ENCODE measurements at regions of chr2 and their contacts with region 1.

Region 1: DNA sequence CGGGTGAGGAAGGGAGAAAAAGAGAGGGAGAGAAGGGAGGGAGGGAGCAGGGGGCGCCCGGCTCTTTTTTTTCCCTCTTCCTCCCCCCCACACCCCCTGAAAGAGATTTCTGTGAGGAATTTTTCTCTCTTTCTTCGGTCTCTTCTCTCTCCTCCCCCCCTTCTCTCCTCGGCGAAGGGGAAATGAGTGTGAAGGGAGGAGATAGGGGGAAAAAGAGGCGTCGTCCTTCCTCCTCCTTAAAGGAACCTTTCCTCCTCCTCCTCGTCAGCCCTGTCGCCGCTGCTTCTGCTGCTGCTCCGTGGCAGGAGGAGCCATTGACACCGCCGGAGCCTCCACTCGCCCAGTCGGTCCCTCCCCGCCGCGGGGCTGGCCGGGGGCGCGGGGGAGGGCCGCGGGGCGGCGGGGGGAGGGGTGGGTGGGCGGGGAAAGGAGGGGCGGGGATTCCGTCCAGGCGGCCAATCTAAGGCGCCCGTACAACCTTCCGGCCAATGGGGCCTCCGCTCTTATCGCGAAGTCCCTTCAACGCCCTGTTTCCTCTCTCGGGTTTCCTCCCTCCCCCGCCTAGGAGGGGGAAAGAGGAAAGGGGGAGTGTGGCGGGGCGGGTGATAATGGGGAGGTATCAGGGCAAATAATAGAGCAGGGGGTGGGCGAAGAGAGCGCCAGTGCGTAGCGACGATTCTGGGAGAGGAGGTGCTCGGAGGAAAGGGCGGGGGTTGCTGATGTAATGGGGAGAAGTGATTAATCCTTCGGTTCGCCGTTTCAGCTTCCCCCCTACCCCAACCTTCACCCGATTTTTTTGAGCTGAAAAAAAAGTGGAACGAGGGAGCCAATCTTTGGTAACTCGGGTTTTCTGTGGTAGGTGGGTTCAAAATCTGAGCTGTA is at the start of gene FBXO11:
- DNase-seq: peak; percentile 87 to 99 (median 93)
- ATAC-seq: peak; percentile 77
- H3K4me3 ChIP-seq: peak within 1 kb of the TSS; percentile 86
- H3K4me3 Mint-ChIP-seq: peak within 1 kb of the TSS; percentile 85
- H3K27ac ChIP-seq: peak within 1 kb of the TSS; percentile 91 to 96
- H3K27ac Mint-ChIP-seq: peak within 1 kb of the TSS; percentile 91
- H3K4me1 ChIP-seq: peaks cover 8% of the 10 kb centered on the region
- H3K4me1 Mint-ChIP-seq: peaks cover 52% of the 10 kb centered on the region
- H3K27me3 ChIP-seq: no peaks in the 10 kb centered on the region
- H3K27me3 Mint-ChIP-seq: no peaks in the 10 kb centered on the region
- CTCF ChIP-seq: peak; percentile 60
- total RNA-seq, gene FBXO11: 121 to 126 TPM

Region 2: GRCh38 chr2:47888581-47889280 is 17.7 kb before region 1 on chr2:
- CTCF ChIA-PET with region 1: interaction called, 6 read pairs
- POLR2A ChIA-PET with region 1: interaction called, 16 read pairs
- intact Hi-C with region 1: loop called (anchors 2 kb)
- DNase-seq: peak in 5 of 14 experiments; percentile 31 to 80 (median 71)
- ATAC-seq: peak; percentile 95
- H3K4me3 ChIP-seq: no peak overlapping the region
- H3K4me3 Mint-ChIP-seq: peak overlapping the region; percentile 74
- H3K27ac ChIP-seq: peak overlapping the region in 1 of 2 donors; percentile 22
- H3K27ac Mint-ChIP-seq: peak overlapping the region; percentile 80
- H3K4me1 ChIP-seq: peaks cover 25% of the 10 kb centered on the region
- H3K4me1 Mint-ChIP-seq: peaks cover 85% of the 10 kb centered on the region
- H3K27me3 ChIP-seq: no peaks in the 10 kb centered on the region
- H3K27me3 Mint-ChIP-seq: no peaks in the 10 kb centered on the region
- CTCF ChIP-seq: no peak

Region 3: GRCh38 chr2:48009256-48009655 is 102.9 kb after region 1 on chr2:
- CTCF ChIA-PET with region 1: no interaction called
- POLR2A ChIA-PET with region 1: no interaction called
- intact Hi-C with region 1: loop called in 1 of 2 experiments (anchors 5 kb)
- DNase-seq: no peak
- ATAC-seq: no peak
- H3K4me3 ChIP-seq: no peak overlapping the region
- H3K4me3 Mint-ChIP-seq: no peak overlapping the region
- H3K27ac ChIP-seq: no peak overlapping the region
- H3K27ac Mint-ChIP-seq: no peak overlapping the region
- H3K4me1 ChIP-seq: no peaks in the 10 kb centered on the region
- H3K4me1 Mint-ChIP-seq: no peaks in the 10 kb centered on the region
- H3K27me3 ChIP-seq: no peaks in the 10 kb centered on the region
- H3K27me3 Mint-ChIP-seq: no peaks in the 10 kb centered on the region
- CTCF ChIP-seq: no peak

Region 4: DNA sequence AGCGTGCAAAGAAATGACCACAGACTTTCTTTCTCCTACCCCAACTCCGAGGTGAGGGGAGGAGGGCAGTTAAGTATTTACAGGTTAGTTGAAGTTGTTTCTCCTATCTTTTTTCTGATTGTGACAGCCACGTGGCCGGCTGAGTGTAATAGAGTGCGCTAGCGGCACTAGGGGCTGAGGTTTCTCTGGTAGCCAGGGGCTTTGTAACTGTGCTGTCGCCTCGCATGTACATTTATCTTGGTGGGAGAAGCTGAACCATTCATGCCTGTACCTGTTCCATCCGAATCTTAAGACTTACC is 409.4 kb after region 1 on chr2:
- CTCF ChIA-PET with region 1: no interaction called
- POLR2A ChIA-PET with region 1: no interaction called
- intact Hi-C with region 1: loop called in 1 of 2 experiments (anchors 2 kb)
- DNase-seq: peak in 10 of 14 experiments; percentile 6 to 74 (median 26)
- ATAC-seq: no peak
- H3K4me3 ChIP-seq: peak overlapping the region; percentile 93
- H3K4me3 Mint-ChIP-seq: peak overlapping the region; percentile 97
- H3K27ac ChIP-seq: peak overlapping the region; percentile 95 to 96
- H3K27ac Mint-ChIP-seq: peak overlapping the region; percentile 89
- H3K4me1 ChIP-seq: peaks cover 40% of the 10 kb centered on the region
- H3K4me1 Mint-ChIP-seq: peaks cover 56% of the 10 kb centered on the region
- H3K27me3 ChIP-seq: no peaks in the 10 kb centered on the region
- H3K27me3 Mint-ChIP-seq: no peaks in the 10 kb centered on the region
- CTCF ChIP-seq: no peak

Region 5: GRCh38 chr2:48420512-48421197 is 514.3 kb after region 1 on chr2:
- CTCF ChIA-PET with region 1: no interaction called
- POLR2A ChIA-PET with region 1: interaction called, 3 read pairs
- intact Hi-C with region 1: loop called in 1 of 2 experiments (anchors 1 kb)
- DNase-seq: peak; percentile 88 to 97 (median 91)
- ATAC-seq: peak; percentile 90
- H3K4me3 ChIP-seq: no peak overlapping the region
- H3K4me3 Mint-ChIP-seq: peak overlapping the region; percentile 11
- H3K27ac ChIP-seq: no peak overlapping the region
- H3K27ac Mint-ChIP-seq: peak overlapping the region; percentile 60
- H3K4me1 ChIP-seq: peaks cover 24% of the 10 kb centered on the region
- H3K4me1 Mint-ChIP-seq: peaks cover 31% of the 10 kb centered on the region
- H3K27me3 ChIP-seq: no peaks in the 10 kb centered on the region
- H3K27me3 Mint-ChIP-seq: peaks cover 10% of the 10 kb centered on the region
- CTCF ChIP-seq: peak; percentile 96

Measured in CD4-positive, alpha-beta T cell (primary cell).